AG04449 (cell line): ENCODE measurements at regions of chr15 and their contacts with region 1.

Region 1: DNA sequence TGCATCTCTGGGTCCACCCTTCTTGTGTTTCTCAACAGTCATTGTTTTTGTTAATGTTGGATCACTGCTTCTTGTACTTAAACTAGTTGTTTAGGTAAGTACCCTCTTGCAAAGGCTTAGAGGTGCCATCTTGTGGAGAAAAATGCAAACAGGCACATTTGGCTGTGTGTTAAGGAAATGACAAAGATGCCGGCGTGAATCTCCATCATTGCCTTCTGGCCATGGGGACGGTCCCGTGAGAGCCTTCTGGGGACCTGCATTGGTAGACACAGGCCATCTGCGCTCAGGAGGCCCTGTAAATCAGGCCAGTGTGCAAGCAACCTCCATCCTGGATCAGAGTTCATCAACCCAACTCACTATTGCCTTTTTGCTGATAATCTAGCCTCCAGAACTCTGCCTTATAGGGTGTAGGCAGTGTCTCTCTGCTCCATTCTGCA is 158.6 kb upstream of the NR2E3 start:
- DNase-seq: peak; percentile 69
- H3K4me3 ChIP-seq: no peak overlapping the region
- CTCF ChIP-seq: peak; percentile 63

Region 2: GRCh38 chr15:71455107-71455506 is 196.7 kb before region 1 on chr15:
- CTCF ChIA-PET with region 1: interaction called, 71 read pairs
- POLR2A ChIA-PET with region 1: no interaction called
- DNase-seq: no peak
- H3K4me3 ChIP-seq: no peak overlapping the region
- CTCF ChIP-seq: no peak

Region 3: DNA sequence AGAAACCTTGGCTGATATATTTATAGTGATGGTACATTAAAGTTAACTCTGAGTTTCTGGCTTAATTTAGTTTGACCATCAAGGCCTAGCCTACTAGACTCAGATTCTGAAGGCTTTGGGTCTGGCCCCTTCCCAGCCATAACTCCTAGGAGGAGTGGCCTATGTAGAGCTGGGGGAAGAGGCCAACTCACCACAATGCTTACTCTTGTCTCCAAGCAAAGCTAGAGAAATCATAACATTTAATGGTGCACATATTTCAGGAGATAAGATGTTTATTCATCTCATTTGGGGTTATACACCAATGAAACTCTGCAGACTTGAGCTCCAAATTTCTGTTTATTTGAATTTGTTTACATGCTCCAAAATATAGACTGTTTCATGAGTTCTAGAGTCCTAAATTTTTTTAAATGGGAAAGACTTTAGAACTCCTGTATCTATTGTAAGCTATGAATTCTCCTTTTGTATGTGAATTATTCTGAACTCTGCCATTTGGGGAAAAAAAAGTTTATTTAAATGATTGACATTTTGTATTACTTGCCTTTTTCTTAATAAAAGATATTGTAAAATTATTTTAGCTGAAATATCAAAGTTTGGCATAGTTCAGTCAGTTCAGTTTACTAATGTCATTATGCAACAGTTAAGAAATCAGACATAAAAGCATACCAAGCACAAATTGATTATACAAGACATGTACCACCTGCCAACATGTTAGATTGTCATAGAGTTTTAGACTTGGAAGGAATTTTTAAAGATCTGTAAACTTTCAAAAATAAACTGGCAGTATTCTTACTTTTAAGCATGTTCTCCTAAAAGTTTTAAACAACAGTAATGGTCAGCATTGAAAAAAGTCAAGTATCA is 15.2 kb after region 1 on chr15:
- CTCF ChIA-PET with region 1: interaction called, 16 read pairs
- POLR2A ChIA-PET with region 1: no interaction called
- DNase-seq: no peak
- H3K4me3 ChIP-seq: no peak overlapping the region
- CTCF ChIP-seq: no peak

Region 4: GRCh38 chr15:71830981-71831380 is 179.2 kb after region 1 on chr15:
- CTCF ChIA-PET with region 1: no interaction called
- POLR2A ChIA-PET with region 1: no interaction called
- DNase-seq: no peak
- H3K4me3 ChIP-seq: no peak overlapping the region
- CTCF ChIP-seq: no peak

Region 5: DNA sequence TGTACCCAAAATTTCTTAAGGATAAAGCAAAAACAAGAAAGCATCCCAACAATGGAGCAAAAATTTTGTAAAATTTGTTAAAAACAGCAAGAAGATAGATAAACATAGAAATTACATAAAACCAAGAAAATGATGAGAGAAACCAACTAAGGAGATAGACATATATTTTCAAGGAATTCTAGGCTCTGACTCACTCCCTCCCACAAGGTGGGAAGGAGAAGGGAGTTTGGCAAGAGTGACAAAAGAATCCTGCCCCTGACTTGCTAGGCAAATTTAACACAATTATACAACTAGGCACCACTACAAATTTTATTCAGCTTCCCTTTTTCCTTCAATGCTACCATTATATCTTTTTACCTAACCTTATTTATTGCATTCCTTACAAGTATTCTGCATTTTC is 395.3 kb after region 1 on chr15:
- CTCF ChIA-PET with region 1: no interaction called
- POLR2A ChIA-PET with region 1: no interaction called
- DNase-seq: no peak
- H3K4me3 ChIP-seq: no peak overlapping the region
- CTCF ChIP-seq: no peak

Region 6: GRCh38 chr15:73009066-73010056 is 1357.6 kb after region 1 on chr15:
- CTCF ChIA-PET with region 1: no interaction called
- POLR2A ChIA-PET with region 1: no interaction called
- DNase-seq: no peak
- H3K4me3 ChIP-seq: no peak overlapping the region
- CTCF ChIP-seq: no peak